ENCODE measurements at regions of chr11 and their contacts with region 1.

Region 1: DNA sequence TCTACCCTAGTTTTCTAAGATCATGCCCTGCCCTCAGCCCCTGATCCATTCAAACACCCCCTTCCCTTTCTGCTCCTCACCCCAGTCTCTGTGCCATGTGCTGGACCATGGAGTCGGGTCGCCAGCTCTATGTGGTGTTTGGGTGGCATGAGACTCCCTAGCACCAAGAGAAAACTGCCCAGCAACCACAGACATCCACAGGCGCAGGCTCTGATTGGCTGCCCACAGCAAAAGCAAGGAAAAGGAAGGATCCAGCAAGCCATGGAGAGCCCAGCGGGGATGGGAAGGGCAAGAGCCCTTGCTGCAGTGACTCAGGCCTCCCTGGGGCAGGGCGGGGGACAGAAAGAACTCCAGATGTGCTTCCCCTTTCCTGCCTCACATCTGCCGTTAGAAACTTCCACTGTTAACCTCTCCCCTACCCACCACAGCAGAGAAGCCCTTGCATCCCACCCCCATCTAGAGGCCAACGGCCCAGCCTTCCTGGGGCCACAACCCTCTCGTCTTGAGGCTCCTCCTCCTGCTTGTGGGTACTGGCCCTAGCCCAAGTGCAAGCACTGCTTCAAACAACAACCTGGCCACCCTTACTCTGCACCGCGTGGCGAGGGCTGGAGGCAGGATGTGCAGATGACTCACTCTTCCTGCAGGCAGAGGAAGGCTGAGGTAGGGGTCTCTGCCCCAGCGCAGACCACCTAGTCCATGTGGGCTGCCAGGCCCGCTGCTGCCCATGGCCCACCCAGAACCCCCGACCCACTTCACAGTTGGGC is 9.7 kb upstream of the AHNAK start:
- DNase-seq: peak; percentile 87 to 95 (median 87)
- ATAC-seq: peak; percentile 59
- H3K4me3 ChIP-seq: no peak overlapping the region
- H3K4me1 ChIP-seq: peaks cover 80% of the 10 kb centered on the region
- CTCF ChIP-seq: no peak

Region 2: GRCh38 chr11:62157603-62158002 is 398.7 kb before region 1 on chr11:
- intact Hi-C with region 1: no loop called
- DNase-seq: no peak
- ATAC-seq: no peak
- H3K4me3 ChIP-seq: no peak overlapping the region
- H3K4me1 ChIP-seq: no peaks in the 10 kb centered on the region
- CTCF ChIP-seq: no peak

Region 3: DNA sequence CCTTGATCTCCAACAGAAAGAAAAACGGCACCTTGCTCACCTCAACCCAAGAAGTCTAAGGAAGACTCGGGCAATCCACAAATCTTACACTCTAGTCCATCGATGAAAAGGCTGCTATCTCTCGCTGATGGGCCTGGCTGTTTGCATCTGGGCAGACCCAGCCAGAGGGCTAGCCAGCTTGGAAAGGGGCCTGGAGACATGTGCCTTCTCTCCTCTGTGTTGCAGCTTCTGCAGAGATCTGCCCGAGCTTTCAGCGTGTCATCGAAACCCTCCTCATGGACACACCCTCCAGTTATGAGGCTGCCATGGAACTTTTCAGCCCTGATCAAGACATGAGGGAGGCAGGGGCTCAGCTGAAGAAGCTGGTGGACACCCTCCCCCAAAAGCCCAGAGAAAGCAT is 134.3 kb before region 1 on chr11:
- intact Hi-C with region 1: loop called in 1 of 2 experiments (anchors 5 kb)
- DNase-seq: no peak
- ATAC-seq: no peak
- H3K4me3 ChIP-seq: no peak overlapping the region
- H3K4me1 ChIP-seq: peaks cover 10% of the 10 kb centered on the region
- CTCF ChIP-seq: no peak

Region 4: GRCh38 chr11:62497132-62497915 is 59.0 kb before region 1 on chr11:
- intact Hi-C with region 1: no loop called
- DNase-seq: peak in 2 of 3 donors; percentile 42 to 64
- ATAC-seq: peak; percentile 73
- H3K4me3 ChIP-seq: no peak overlapping the region
- H3K4me1 ChIP-seq: peaks cover 17% of the 10 kb centered on the region
- CTCF ChIP-seq: no peak

Region 5: DNA sequence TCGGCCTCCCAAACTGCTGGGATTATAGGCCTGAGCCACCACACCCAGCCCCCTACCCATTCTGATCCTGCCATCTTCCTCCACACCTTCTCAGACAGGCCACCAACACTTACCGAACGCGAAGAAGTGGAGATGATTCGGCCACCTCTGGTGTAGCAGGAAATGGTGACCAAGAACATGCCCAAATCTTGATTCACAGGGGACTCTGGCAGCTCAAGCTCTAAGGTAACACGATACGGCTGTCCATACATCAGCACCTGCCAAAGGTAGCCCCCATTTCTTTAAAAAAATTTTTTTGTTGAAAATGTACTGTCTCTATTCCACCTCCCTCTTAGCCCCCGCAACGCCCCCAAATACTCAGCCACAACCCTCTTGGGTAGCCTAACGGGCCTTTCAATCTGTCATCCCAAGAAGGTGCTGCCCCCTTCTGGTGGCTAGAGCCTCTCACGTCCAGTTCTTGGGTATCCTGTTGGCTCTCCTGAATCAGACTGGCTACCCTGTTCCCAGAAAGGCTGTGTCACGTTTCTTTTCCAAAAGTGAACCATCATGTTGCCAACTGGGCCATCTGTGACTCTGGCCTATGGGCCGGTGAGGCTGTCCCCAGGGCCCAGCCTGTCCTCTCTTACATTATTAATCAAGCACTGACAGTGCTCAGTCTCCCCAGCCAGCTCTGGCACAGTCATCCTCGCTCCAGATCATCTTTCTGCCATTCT is 138.3 kb after region 1 on chr11:
- intact Hi-C with region 1: no loop called
- DNase-seq: peak; percentile 62 to 91 (median 78)
- ATAC-seq: peak; percentile 92
- H3K4me3 ChIP-seq: no peak overlapping the region
- H3K4me1 ChIP-seq: no peaks in the 10 kb centered on the region
- CTCF ChIP-seq: peak; percentile 65

Region 6: GRCh38 chr11:62713343-62713742 is 157.1 kb after region 1 on chr11:
- intact Hi-C with region 1: no loop called
- DNase-seq: peak in 2 of 3 donors; percentile 47 to 49
- ATAC-seq: peak; percentile 55
- H3K4me3 ChIP-seq: no peak overlapping the region
- H3K4me1 ChIP-seq: peaks cover 17% of the 10 kb centered on the region
- CTCF ChIP-seq: no peak